Heart right ventricle (tissue), 16 donors: ENCODE measurements at regions of chr19 and their contacts with region 1.

Region 1: GRCh38 chr19:1026189-1027019 is at the start of gene CNN2:
- DNase-seq: peak; percentile 78 to 82
- ATAC-seq: peak; percentile 55 to 89 (median 77)
- H3K4me3 ChIP-seq: peak within 1 kb of the TSS; percentile 63 to 97 (median 90)
- H3K27ac ChIP-seq: peak within 1 kb of the TSS; percentile 86 to 99 (median 97)
- H3K4me1 ChIP-seq: peaks cover 14 to 59% (median 45%) of the 10 kb centered on the region in 9 donors
- H3K27me3 ChIP-seq: no peaks in the 10 kb centered on the region
- CTCF ChIP-seq: no peak
- total RNA-seq, gene CNN2: 33.0 to 117 (median 63.5) TPM

Region 2: GRCh38 chr19:1039646-1040475 is 13.5 kb after region 1 on chr19 and contains the start of gene ABCA7:
- intact Hi-C with region 1: no loop called
- DNase-seq: peak; percentile 98 to 100
- ATAC-seq: peak; percentile 91 to 97 (median 96)
- H3K4me3 ChIP-seq: peak within 1 kb of the TSS; percentile 30 to 73 (median 61)
- H3K27ac ChIP-seq: peak within 1 kb of the TSS in 6 of 10 donors; percentile 19 to 92 (median 48)
- H3K4me1 ChIP-seq: peaks cover 5 to 56% (median 29%) of the 10 kb centered on the region in 9 donors
- H3K27me3 ChIP-seq: no peaks in the 10 kb centered on the region
- CTCF ChIP-seq: peak in 2 of 9 donors; percentile 6 to 13
- total RNA-seq, gene ABCA7: 4.3 to 18.1 (median 5.6) TPM

Region 3: DNA sequence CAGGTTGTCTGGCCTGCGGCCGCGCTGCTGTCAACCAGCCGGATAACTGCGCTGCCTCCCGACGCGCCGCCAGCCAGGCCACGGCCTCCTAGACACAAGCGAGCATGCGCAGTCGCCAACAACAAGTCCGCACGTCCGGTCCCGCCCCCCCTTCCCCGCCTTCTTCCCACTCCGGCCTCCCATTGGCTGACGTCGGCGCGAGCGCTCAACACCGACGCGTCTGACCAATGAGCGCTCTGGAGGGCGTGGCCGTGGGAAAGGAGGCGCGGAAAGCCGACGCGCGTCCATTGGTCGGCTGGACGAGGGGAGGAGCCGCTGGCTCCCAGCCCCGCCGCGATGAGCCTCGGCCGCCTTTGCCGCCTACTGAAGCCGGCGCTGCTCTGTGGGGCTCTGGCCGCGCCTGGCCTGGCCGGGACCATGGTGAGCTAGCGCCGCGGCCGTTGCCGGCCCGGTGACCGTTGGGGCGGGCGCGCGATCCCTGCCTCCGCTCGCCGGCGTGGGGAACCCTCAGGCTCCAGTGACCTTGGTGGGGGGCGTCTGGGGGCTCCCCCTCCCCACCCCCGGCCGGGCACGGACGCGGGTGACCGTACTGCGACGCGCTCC is 77.4 kb after region 1 on chr19 and contains the start of gene GPX4:
- intact Hi-C with region 1: loop called in 7 of 10 experiments (anchors 2 to 10 kb)
- DNase-seq: peak; percentile 99
- ATAC-seq: peak; percentile 82 to 92 (median 90)
- H3K4me3 ChIP-seq: peak within 1 kb of the TSS; percentile 40 to 96 (median 82)
- H3K27ac ChIP-seq: peak within 1 kb of the TSS; percentile 88 to 100 (median 98)
- H3K4me1 ChIP-seq: peaks cover 30 to 78% (median 66%) of the 10 kb centered on the region in 9 donors
- H3K27me3 ChIP-seq: no peaks in the 10 kb centered on the region
- CTCF ChIP-seq: no peak
- total RNA-seq, gene GPX4: 244 to 405 (median 299) TPM